Vagina (tissue), 2 donors: ENCODE measurements at regions of chr1 and their contacts with region 1.

Region 1: DNA sequence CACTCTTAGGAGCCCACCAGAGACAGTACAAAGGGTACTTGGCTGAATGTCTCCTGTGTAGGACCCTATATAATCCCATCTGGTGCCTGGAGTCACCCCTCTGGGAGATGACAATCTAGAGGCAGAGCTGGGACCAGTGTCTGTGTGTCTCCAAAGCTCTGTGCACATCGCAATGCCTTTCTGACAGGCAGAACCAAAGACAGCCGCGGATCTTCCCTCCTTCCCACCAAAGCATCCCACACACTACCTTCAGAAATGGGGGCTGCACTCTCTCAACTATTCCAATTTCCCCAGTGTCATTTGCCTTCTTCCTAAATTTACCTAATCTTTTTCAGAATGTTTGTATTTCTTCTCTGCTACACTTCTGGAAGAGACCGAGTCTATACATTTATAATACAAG is 12.0 kb downstream of the PGBD5 start:
- DNase-seq: no peak
- H3K4me3 ChIP-seq: no peak overlapping the region
- H3K27ac ChIP-seq: no peak overlapping the region
- H3K4me1 ChIP-seq: no peaks in the 10 kb centered on the region
- H3K27me3 ChIP-seq: no peaks in the 10 kb centered on the region
- CTCF ChIP-seq: no peak
- POLR2A ChIP-seq: no peak

Region 2: DNA sequence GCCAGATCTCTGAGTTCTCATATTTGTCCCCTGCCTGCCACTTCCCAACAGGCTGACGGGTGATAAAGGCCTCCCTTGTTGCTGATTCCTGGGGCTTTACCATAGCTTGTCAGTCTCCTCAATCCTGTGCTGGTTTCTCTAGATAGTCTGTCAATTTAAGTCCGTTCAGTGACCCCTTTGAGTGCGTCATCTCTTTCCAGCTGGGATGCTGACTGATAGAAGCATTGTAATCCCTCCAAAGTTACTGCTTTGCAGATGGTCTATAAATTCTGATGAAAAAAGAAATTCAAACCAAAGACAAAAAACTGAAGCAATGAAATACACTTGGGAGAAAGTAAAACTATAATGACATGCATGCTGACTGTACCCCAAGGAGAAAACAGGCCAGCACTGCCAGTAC is 1650.5 kb before region 1 on chr1:
- intact Hi-C with region 1: loop called (anchors 5 kb)
- DNase-seq: no peak
- H3K4me3 ChIP-seq: no peak overlapping the region
- H3K27ac ChIP-seq: no peak overlapping the region
- H3K4me1 ChIP-seq: no peaks in the 10 kb centered on the region
- H3K27me3 ChIP-seq: no peaks in the 10 kb centered on the region
- CTCF ChIP-seq: no peak
- POLR2A ChIP-seq: no peak